AG04449 (cell line): ENCODE measurements at regions of chr11 and their contacts with region 1.

Region 1: DNA sequence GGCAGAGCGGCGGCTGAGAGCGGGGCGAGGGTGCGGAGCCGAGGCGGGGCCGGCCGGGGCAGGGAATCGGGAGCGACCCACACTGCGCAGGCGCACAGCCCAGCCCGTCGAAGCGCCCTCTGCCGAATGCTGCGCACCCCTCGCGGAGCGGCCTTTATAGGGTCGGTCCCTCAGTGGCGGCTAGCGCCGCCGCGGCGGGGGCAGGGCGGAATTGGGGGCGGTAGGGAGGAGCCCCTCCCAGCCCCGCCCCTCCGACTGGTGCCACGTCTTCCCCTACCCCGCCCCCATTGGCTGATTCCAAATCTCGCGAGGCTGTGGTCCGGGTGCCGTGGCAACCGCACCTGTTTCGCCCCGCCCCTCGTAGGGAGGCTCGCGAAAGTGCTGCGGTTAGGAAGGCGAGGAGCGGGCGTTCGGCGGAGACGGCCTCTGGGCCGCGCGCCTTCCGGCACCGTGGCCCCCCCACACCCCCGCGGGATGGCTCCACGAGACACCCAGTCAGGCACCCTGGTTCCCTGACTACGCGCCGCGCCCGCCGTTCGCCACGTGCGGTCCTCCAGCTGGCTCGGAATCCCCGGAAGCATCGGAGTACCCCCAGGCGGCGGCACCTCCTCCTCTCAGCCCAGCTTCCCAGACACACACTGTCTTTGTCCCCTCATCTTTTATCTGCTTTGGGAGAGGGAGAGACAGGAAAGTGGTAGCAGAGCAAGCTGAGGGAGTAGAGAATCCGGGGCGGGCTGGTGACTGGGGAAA is at the start of gene EHD1:
- DNase-seq: peak; percentile 66
- H3K4me3 ChIP-seq: peak within 1 kb of the TSS; percentile 99
- CTCF ChIP-seq: peak; percentile 85

Region 2: DNA sequence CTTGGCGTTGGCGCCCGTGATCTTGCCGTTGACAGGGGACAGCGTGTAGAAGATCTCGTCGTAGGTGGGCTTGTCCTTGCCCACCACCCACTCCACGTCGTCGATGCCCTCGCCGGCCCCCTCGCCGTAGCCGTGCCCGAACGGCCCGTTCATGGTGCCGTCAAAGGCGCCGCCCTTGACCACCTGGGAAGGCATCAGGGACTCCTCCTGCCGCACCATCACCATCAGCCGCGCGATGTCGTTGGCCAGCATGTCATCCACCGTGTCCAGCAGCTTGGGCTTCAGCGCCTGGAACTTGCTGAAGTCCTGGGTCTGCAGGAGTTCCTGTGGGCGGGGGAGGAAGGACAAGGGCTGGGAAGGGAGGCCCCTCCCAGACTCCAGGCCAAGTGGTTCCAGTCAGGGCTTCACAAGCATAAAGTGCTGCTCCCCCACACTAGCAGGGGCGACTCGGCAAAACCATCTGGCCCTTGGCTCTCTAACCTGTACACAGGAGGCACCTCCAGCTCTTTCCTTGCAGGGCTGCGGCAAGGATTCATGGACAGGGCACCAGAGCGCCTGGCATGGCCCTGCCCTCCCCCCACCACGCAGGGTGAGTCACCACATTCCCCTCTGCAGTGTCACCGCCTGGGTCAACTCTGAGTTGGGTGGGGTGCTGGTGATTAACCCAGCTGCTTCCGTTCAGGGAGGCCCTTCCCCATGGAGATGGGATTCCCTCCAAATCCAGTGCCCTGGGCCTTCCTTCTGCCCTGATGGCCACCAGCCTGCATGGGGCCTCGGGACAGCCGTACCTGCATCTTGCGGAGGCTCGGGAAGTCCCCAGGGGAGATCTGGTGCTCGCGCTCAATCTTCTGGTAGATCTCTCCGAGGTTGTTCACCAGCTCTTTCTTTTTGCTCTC is 23.9 kb before region 1 on chr11:
- CTCF ChIA-PET with region 1: interaction called, 1,375 read pairs
- POLR2A ChIA-PET with region 1: interaction called, 31 read pairs
- DNase-seq: peak; percentile 47
- H3K4me3 ChIP-seq: no peak overlapping the region
- CTCF ChIP-seq: no peak

Region 3: GRCh38 chr11:64864473-64865285 is 14.0 kb before region 1 on chr11:
- CTCF ChIA-PET with region 1: interaction called, 1,375 read pairs
- POLR2A ChIA-PET with region 1: interaction called, 61 read pairs
- DNase-seq: peak; percentile 75
- H3K4me3 ChIP-seq: 0 out of 2 replicates have a peak overlapping the region, but pooled peaks have one; percentile 3
- CTCF ChIP-seq: no peak

Region 4: DNA sequence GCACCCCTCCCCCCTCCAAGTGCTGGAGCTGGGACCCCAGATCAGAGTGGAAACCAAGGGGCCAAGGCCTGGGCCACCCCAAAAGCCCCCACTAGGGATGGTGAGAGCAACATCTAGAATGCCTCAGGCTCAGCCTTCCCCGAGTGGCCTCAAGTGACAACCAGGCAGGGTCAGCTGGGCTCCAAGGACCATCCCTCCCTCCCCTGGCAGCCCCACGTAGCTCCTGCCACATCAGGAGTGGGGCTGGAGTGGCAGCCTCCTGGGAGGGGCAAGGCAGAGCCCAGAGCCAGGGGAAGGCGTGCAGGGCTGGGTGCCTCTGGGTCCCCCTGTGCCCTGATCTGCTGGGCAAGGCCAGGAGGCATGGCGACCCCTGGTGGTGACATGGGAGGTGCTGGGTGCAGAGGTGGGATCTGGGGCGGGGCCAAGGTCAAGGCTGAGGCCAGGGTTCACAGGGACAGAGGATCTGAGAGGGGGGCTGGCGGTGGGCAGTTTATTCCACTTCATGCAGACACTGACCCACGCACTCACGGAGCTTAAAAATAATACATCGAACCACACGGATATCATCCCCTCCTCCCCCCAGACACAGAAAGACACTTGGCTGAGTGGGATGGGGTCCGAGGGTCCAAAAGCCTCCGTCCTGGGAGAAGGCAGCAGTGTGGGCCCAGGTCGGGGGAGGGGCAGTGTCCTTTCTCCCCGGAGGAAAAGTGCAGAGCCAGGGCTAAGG is 15.6 kb after region 1 on chr11:
- CTCF ChIA-PET with region 1: interaction called, 88 read pairs
- POLR2A ChIA-PET with region 1: interaction called, 3 read pairs
- DNase-seq: no peak
- H3K4me3 ChIP-seq: no peak overlapping the region
- CTCF ChIP-seq: peak; percentile 96